ENCODE measurements at regions of chr14 and their contacts with region 1.

Region 1: DNA sequence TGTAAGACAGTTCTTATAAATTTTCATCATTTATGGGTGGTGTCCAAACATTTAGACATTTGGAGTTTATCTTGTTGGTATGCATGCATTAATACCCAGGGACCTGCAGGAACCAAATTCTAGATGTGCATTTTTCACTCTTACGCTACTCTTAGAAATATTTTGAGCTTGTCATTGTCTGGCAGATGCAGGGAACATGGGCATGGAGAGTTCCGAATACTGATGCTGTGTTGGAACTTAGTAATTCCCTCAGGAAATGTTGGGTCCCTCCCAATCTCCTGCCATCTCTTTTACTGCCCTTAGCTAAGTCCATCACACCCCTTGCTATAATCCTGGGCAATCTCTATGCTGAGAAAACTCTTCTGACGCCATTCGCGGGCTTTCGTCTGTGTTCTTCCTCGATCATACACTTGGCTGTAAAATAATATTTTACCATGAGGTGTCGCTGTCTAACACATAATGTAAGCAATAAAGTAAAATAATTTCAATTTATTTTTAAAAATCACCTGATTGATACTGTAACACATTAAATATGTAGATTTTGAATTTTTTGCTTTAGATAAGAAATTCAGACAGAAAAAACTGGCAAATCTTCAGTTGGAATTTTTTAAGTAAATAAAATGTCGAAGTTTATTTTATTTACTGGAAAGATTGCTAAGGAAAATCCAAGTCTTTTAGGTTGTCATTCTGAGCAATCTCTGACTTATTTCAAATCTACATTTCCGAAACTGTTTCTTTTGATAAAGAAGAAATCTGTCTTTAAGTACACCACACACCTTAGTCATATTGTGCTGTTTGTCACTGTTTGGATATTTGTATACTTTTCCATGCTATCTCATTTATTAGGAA is 304.1 kb upstream of the SSTR1 start:
- DNase-seq: peak in 1 of 2 donors; percentile 6
- ATAC-seq: peak in 3 of 8 donors; percentile 36 to 48 (median 41)
- H3K4me3 ChIP-seq: no peak overlapping the region
- H3K27ac ChIP-seq: no peak overlapping the region
- H3K4me1 ChIP-seq: peaks cover 0 to 4% (median 0%) of the 10 kb centered on the region in 9 donors
- H3K27me3 ChIP-seq: peaks cover 0 to 7% (median 0%) of the 10 kb centered on the region in 7 donors
- CTCF ChIP-seq: peak; percentile 24 to 75 (median 61)

Region 2: GRCh38 chr14:38197001-38197783 is 293.6 kb after region 1 on chr14:
- intact Hi-C with region 1: loop called in 2 of 10 experiments (anchors 5 to 10 kb)
- DNase-seq: no peak
- ATAC-seq: no peak
- H3K4me3 ChIP-seq: no peak overlapping the region
- H3K27ac ChIP-seq: no peak overlapping the region
- H3K4me1 ChIP-seq: no peaks in the 10 kb centered on the region
- H3K27me3 ChIP-seq: no peaks in the 10 kb centered on the region
- CTCF ChIP-seq: peak; percentile 15 to 71 (median 57)

Region 3: DNA sequence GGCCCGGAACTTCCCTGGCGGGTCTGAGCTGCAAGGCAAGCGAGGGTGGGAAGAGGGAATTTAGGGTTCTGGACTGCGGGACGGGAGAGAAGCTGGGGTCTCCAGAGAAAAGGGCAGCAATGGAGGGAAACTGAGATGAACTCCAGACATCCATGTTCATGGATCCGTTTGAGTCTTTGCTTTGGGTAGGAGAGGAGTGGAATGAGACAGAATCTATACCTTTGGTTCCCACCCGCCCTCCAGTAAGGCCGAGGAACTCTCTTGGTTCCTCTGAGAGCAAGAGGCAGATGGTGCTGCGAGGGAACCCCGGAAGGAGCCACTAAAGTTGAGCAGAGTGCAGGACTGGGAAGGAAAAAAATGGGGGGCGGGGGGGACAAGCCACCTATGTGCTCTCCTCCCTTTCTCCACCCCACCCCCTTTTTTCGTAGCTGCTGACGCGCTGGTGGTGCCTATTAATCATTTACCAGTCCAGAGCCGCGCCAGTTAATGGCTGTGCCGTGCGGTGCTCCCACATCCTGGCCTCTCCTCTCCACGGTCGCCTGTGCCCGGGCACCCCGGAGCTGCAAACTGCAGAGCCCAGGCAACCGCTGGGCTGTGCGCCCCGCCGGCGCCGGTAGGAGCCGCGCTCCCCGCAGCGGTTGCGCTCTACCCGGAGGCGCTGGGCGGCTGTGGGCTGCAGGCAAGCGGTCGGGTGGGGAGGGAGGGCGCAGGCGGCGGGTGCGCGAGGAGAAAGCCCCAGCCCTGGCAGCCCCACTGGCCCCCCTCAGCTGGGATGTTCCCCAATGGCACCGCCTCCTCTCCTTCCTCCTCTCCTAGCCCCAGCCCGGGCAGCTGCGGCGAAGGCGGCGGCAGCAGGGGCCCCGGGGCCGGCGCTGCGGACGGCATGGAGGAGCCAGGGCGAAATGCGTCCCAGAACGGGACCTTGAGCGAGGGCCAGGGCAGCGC is 305.3 kb after region 1 on chr14:
- intact Hi-C with region 1: loop called in 1 of 10 experiments (anchors 10 kb)
- DNase-seq: peak; percentile 6 to 24
- ATAC-seq: peak; percentile 53 to 75 (median 64)
- H3K4me3 ChIP-seq: peak overlapping the region; percentile 28 to 64 (median 52)
- H3K27ac ChIP-seq: peak overlapping the region in 2 of 10 donors; percentile 13 to 54
- H3K4me1 ChIP-seq: peaks cover 0 to 41% (median 23%) of the 10 kb centered on the region in 9 donors
- H3K27me3 ChIP-seq: peaks cover 0 to 67% (median 50%) of the 10 kb centered on the region in 7 donors
- CTCF ChIP-seq: peak in 5 of 9 donors; percentile 8 to 34 (median 33)

Region 4: GRCh38 chr14:38867561-38868150 is 964.1 kb after region 1 on chr14:
- intact Hi-C with region 1: loop called in 6 of 10 experiments (anchors 5 to 10 kb)
- DNase-seq: peak; percentile 26 to 79
- ATAC-seq: peak in 7 of 8 donors; percentile 81 to 95 (median 88)
- H3K4me3 ChIP-seq: no peak overlapping the region
- H3K27ac ChIP-seq: no peak overlapping the region
- H3K4me1 ChIP-seq: peaks cover 0 to 28% (median 14%) of the 10 kb centered on the region in 9 donors
- H3K27me3 ChIP-seq: no peaks in the 10 kb centered on the region
- CTCF ChIP-seq: peak; percentile 49 to 89 (median 81)

Region 5: DNA sequence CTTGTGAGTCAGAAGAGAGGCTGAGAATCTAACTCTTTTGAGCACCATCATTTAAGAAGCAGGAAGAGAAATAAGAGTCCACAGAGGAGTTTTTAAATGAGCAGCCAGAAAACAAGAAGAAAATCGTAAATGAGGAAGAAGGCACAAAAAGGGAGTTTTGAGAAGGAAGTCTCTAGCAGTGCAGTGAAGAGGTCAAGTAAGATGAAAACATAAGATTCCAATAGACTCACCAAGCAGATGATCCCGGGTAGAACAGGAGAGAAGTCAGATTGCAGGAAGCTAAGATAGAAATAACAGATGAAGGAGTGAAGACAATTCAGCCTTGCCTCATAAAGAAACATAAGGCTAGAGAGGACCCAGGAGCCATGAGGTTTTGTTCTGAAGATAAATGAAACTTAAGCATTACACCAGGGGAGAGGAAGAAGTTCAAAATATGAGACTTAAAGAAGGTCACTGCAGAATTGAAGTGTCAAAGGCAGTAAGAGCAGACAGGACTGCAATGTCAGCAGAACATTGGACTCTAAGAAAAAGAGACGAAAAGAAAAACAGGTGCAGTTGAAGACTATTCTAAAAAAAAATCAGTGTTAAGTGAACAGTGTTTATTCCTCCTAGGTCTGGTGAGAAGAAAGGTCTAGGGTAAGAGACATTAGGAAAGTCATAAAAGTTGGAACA is 970.5 kb after region 1 on chr14:
- intact Hi-C with region 1: loop called in 7 of 10 experiments (anchors 5 to 10 kb)
- DNase-seq: no peak
- ATAC-seq: no peak
- H3K4me3 ChIP-seq: no peak overlapping the region
- H3K27ac ChIP-seq: peak overlapping the region in 3 of 10 donors; percentile 5 to 48 (median 16)
- H3K4me1 ChIP-seq: peaks cover 0 to 23% (median 18%) of the 10 kb centered on the region in 9 donors
- H3K27me3 ChIP-seq: no peaks in the 10 kb centered on the region
- CTCF ChIP-seq: no peak

Region 6: GRCh38 chr14:38880643-38881524 is 977.3 kb after region 1 on chr14:
- intact Hi-C with region 1: loop called in 2 of 10 experiments (anchors 5 to 10 kb)
- DNase-seq: no peak
- ATAC-seq: no peak
- H3K4me3 ChIP-seq: no peak overlapping the region
- H3K27ac ChIP-seq: peak overlapping the region in 5 of 10 donors; percentile 10 to 60 (median 32)
- H3K4me1 ChIP-seq: peaks cover 0 to 38% (median 5%) of the 10 kb centered on the region in 9 donors
- H3K27me3 ChIP-seq: no peaks in the 10 kb centered on the region
- CTCF ChIP-seq: no peak

Region 7: DNA sequence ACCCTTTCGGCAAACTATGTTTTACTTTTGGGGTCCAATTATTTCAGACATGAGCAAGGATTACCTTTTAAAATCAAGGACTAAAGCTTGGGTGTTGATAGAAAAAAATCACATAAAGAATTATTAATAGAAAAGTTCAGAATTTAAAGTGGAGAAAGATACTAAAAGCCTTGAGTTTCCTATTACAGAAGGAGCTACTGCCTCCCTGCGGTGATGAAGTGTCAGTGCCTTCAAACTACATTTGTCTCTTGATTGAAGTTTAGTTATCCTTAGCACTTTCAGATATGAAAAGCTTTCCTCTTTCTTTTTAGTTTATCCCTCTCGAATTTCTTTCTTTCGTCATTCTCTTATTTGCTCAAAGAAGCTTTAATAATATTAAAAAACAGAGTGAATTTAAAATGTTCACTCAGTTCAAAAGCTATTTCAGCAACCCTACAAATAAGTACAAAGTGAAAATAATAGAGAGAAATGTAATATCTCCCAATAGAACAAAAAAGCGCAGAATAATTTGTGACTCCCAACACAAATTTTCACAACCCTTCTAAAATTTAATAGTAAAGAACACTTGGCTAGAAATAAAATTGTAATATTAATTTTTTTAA is 1111.9 kb after region 1 on chr14:
- intact Hi-C with region 1: loop called in 6 of 10 experiments (anchors 10 kb)
- DNase-seq: peak in 1 of 2 donors; percentile 25
- ATAC-seq: peak in 1 of 8 donors; percentile 38
- H3K4me3 ChIP-seq: no peak overlapping the region
- H3K27ac ChIP-seq: no peak overlapping the region
- H3K4me1 ChIP-seq: peaks cover 0 to 5% (median 0%) of the 10 kb centered on the region in 9 donors
- H3K27me3 ChIP-seq: no peaks in the 10 kb centered on the region
- CTCF ChIP-seq: peak; percentile 61 to 93 (median 88)

Measured in heart right ventricle (tissue), 16 donors.